CD14-positive monocyte (primary cell): ENCODE measurements at regions of chr2 and their contacts with region 1.

Region 1: DNA sequence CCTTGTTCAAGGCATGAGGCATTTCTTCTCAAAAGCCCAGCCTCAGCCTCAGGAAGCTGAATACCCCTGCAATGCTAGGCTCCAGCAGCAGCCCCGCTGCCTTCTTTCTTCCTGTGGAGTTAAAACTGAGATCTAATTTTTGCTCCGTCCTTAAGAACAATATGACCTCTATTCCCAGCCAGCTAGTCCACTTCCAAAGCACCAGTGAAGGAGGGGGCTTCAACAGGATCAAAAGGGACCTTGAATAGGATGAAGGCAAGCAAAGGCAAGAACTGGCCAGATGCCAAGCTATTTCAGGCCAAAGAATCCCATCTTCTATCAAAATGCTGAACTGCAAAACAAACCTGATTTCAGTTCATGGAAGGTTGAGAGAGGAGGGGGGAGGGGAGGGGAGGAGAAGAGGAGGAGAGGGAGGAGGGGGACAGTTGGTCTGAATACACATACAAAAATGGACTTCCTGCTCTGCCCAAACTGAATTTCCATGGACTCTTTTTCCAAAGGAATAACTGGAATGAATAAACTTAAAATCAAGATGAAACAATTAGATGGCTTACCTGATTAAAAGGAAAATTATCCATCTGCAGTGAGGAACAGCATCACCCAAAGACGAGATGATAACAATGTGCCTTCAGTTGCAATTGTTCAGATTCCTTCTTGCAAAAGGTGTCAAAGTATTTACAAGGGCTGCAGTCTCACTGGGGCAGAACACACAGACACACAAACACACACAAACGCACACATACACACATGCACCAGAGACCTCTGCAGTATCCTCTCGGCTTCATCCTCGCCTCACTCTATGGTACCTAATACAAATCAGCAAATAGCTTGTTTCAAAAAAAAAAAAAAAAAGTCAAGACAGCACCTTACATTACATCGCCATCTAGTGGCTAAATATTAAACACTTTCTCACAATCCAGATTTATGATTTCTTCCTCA is at the start of gene SCN1A:
- DNase-seq: peak; percentile 19 to 58 (median 20)
- H3K4me3 ChIP-seq: no peak within 1 kb of the TSS
- H3K4me3 Mint-ChIP-seq: no peak within 1 kb of the TSS
- H3K27ac ChIP-seq: no peak within 1 kb of the TSS
- H3K27ac Mint-ChIP-seq: no peak within 1 kb of the TSS
- H3K4me1 ChIP-seq: peaks cover 3 to 4% of the 10 kb centered on the region in 2 donors
- H3K4me1 Mint-ChIP-seq: peaks cover 10% of the 10 kb centered on the region
- H3K27me3 ChIP-seq: peaks cover 0 to 3% of the 10 kb centered on the region in 2 donors
- H3K27me3 Mint-ChIP-seq: peaks cover 3 to 10% (median 5%) of the 10 kb centered on the region in 3 donors
- CTCF ChIP-seq: peak; percentile 84
- polyA plus RNA-seq, gene SCN1A: not detected

Region 2: DNA sequence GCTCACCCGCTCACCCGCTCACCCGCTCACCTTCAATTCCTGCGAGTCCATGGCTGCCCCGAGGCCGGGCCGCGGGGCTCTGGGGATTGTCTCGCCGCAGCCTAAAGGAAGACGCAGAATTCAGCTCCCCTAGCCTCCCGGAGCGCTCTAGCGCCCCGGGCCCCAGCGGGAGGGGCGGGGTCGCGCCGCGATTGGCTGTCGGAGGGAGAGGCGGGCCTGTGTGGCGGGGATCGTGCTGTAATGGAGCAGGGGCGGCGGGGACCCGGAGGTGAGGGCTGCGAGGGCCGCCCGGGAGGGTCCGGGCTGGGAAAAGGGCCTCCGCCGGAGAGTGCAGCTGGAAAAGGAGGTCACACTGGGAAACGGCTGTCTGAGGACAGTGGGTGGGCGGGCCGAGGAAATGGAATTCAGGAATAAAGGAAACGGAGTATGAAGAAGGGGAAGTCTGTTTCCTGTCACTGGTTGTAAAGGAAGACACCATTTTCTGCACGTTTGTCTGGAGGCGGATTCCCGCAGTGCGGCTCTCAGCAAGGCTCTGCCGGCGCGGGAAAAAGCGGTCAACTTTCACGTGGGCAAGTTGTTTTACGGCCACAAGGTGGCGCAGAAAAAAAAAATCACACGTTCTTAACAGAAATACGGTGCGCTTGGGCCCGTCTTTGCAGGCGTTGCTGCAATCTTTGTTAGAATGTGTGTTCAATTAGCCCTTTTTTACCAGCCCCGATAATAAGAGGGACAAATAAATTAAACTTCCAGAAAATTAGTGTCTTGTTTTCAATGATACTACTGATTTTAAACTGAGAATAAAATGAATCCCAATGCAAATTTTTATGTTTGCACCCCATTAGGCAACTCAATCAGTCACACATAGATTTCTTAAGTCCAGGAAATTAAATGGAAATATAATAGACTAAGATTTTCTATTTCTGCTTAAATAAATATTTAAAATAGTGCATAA is 173.6 kb before region 1 on chr2 and contains the start of gene TTC21B:
- intact Hi-C with region 1: loop called in 1 of 2 experiments (anchors 2 kb)
- DNase-seq: peak; percentile 83 to 89 (median 84)
- H3K4me3 ChIP-seq: peak within 1 kb of the TSS; percentile 73 to 85 (median 76)
- H3K4me3 Mint-ChIP-seq: no peak within 1 kb of the TSS
- H3K27ac ChIP-seq: peak within 1 kb of the TSS; percentile 75 to 83
- H3K27ac Mint-ChIP-seq: no peak within 1 kb of the TSS
- H3K4me1 ChIP-seq: peaks cover 20 to 28% of the 10 kb centered on the region in 2 donors
- H3K4me1 Mint-ChIP-seq: peaks cover 11% of the 10 kb centered on the region
- H3K27me3 ChIP-seq: no peaks in the 10 kb centered on the region
- H3K27me3 Mint-ChIP-seq: peaks cover 0 to 5% (median 2%) of the 10 kb centered on the region in 3 donors
- CTCF ChIP-seq: peak; percentile 94
- polyA plus RNA-seq, gene TTC21B: 3.1 to 6.7 (median 3.8) TPM

Region 3: GRCh38 chr2:166057370-166058164 is 69.9 kb before region 1 on chr2:
- intact Hi-C with region 1: loop called (anchors 5 kb)
- DNase-seq: peak; percentile 14 to 43 (median 25)
- H3K4me3 ChIP-seq: no peak overlapping the region
- H3K4me3 Mint-ChIP-seq: no peak overlapping the region
- H3K27ac ChIP-seq: no peak overlapping the region
- H3K27ac Mint-ChIP-seq: no peak overlapping the region
- H3K4me1 ChIP-seq: no peaks in the 10 kb centered on the region
- H3K4me1 Mint-ChIP-seq: no peaks in the 10 kb centered on the region
- H3K27me3 ChIP-seq: no peaks in the 10 kb centered on the region
- H3K27me3 Mint-ChIP-seq: peaks cover 0 to 1% (median 0%) of the 10 kb centered on the region in 3 donors
- CTCF ChIP-seq: peak; percentile 75

Region 4: GRCh38 chr2:166106431-166107015 is 21.0 kb before region 1 on chr2:
- intact Hi-C with region 1: no loop called
- DNase-seq: peak; percentile 38 to 47 (median 42)
- H3K4me3 ChIP-seq: no peak overlapping the region
- H3K4me3 Mint-ChIP-seq: no peak overlapping the region
- H3K27ac ChIP-seq: no peak overlapping the region
- H3K27ac Mint-ChIP-seq: peak overlapping the region in 2 of 7 donors; percentile 41 to 73
- H3K4me1 ChIP-seq: no peaks in the 10 kb centered on the region
- H3K4me1 Mint-ChIP-seq: no peaks in the 10 kb centered on the region
- H3K27me3 ChIP-seq: no peaks in the 10 kb centered on the region
- H3K27me3 Mint-ChIP-seq: peaks cover 0 to 3% (median 2%) of the 10 kb centered on the region in 3 donors
- CTCF ChIP-seq: peak; percentile 73